CD4-positive, alpha-beta memory T cell (primary cell): ENCODE measurements at regions of chr10 and their contacts with region 1.

Region 1: DNA sequence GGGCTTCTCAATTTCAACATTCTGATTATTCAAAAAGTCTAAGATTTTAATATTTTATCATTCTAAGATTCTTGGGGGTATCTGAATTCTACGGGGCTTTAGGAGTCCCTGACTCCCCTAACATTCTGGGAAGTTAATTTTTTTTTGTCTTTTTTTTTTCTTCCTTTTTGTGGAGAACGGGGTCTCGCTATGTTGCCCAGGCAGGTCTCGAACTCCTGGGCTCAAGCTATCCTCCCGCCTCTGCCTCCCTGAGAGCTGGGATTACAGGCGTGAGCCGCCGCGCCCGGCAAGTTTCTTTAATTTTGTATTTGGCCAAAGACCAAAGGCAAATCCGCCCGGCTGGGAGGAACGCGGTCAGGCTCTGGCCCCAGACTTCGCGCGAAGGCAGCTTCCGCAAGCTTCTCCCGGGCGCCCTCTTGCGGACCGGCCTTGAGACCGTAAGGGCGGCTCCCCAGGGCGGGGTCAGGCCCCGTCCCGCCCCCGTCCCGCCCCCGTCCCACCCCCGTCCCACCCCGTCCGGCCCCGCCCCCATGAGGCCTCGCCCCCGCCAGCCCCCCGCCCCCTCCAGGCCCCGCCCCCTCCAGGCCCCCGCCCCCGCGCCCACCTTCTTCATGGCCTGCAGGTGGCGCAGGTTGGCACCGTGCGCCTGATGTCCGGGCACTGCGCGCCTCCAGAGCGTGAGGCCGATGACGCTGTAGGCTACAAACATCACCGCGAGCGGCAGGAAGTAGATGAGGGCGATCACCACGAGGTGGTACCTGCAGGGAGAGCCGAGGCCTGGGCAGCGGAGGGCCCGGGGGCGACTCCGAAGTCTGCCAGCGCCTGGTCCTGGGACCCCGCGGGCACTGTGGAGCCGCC is 8.2 kb downstream of the TACR2 start:
- DNase-seq: peak; percentile 89 to 91 (median 89)
- H3K4me3 ChIP-seq: peak overlapping the region in 1 of 2 donors; percentile 25
- H3K4me3 Mint-ChIP-seq: peak overlapping the region in 7 of 8 donors; percentile 64 to 82 (median 70)
- H3K27ac ChIP-seq: peak overlapping the region; percentile 61
- H3K27ac Mint-ChIP-seq: peak overlapping the region; percentile 70 to 96 (median 94)
- H3K4me1 ChIP-seq: peaks cover 17% of the 10 kb centered on the region
- H3K4me1 Mint-ChIP-seq: peaks cover 8 to 39% (median 18%) of the 10 kb centered on the region in 4 donors
- H3K27me3 ChIP-seq: no peaks in the 10 kb centered on the region
- H3K27me3 Mint-ChIP-seq: no peaks in the 10 kb centered on the region

Region 2: GRCh38 chr10:69179743-69180524 is 228.6 kb before region 1 on chr10 and contains the start of gene SUPV3L1:
- CTCF ChIA-PET with region 1: no interaction called
- POLR2A ChIA-PET with region 1: interaction called, 3 read pairs
- intact Hi-C with region 1: loop called (anchors 5 kb)
- DNase-seq: peak; percentile 89 to 93 (median 91)
- H3K4me3 ChIP-seq: peak within 1 kb of the TSS; percentile 61 to 93
- H3K4me3 Mint-ChIP-seq: peak within 1 kb of the TSS; percentile 92 to 99 (median 98)
- H3K27ac ChIP-seq: peak within 1 kb of the TSS; percentile 94
- H3K27ac Mint-ChIP-seq: peak within 1 kb of the TSS; percentile 98 to 100 (median 100)
- H3K4me1 ChIP-seq: peaks cover 24% of the 10 kb centered on the region
- H3K4me1 Mint-ChIP-seq: peaks cover 31 to 51% (median 43%) of the 10 kb centered on the region in 4 donors
- H3K27me3 ChIP-seq: no peaks in the 10 kb centered on the region
- H3K27me3 Mint-ChIP-seq: no peaks in the 10 kb centered on the region
- total RNA-seq, gene SUPV3L1: 35.7 to 39.0 TPM

Region 3: GRCh38 chr10:69318106-69318866 is 90.3 kb before region 1 on chr10:
- CTCF ChIA-PET with region 1: interaction called, 7 read pairs
- POLR2A ChIA-PET with region 1: interaction called, 10 read pairs
- intact Hi-C with region 1: loop called (anchors 1 kb)
- DNase-seq: peak; percentile 90 to 92 (median 91)
- H3K4me3 ChIP-seq: peak overlapping the region; percentile 66 to 99
- H3K4me3 Mint-ChIP-seq: peak overlapping the region; percentile 77 to 98 (median 95)
- H3K27ac ChIP-seq: peak overlapping the region; percentile 84
- H3K27ac Mint-ChIP-seq: peak overlapping the region; percentile 79 to 99 (median 84)
- H3K4me1 ChIP-seq: peaks cover 43% of the 10 kb centered on the region
- H3K4me1 Mint-ChIP-seq: peaks cover 23 to 52% (median 35%) of the 10 kb centered on the region in 4 donors
- H3K27me3 ChIP-seq: no peaks in the 10 kb centered on the region
- H3K27me3 Mint-ChIP-seq: no peaks in the 10 kb centered on the region

Region 4: DNA sequence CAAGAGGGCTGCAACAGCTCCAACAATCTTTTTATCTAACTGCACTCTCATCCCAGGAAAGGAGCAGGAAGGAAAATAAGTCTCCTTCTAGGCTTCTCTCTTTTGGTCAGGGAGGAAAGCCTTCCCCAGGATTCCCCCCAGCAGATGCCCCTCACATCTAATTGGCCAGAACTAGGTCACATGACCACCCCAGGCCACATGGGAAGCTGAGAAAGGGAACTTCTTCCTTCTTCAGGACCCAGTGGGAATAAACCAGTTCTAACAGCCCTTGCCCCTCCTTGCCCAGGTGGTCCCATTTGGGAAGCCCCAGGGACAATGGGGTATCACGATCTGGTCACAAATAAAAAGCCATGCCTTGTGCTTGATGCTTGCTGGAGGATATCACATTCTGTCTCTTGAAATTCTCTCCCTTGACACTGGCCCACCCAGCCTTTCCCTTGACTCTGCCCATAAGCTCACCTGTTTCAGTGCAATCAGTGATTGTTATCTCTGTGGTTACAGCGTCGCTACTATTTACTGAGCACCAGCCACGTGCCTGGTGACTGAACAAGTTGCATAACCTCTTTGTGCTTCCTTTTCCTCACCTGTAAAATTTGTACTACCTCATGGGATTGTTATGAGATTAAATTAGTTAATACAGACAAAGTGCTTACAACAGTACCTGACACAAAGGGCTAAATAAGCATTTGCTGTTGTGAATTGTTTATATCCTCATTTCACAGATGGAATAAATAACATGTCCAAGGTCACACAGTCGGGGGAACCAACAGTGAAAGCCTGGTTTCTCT is 17.2 kb after region 1 on chr10:
- CTCF ChIA-PET with region 1: interaction called, 50 read pairs
- POLR2A ChIA-PET with region 1: interaction called, 18 read pairs
- intact Hi-C with region 1: loop called (anchors 1 kb)
- DNase-seq: peak; percentile 73 to 86 (median 82)
- H3K4me3 ChIP-seq: no peak overlapping the region
- H3K4me3 Mint-ChIP-seq: peak overlapping the region in 7 of 8 donors; percentile 2 to 72 (median 47)
- H3K27ac ChIP-seq: peak overlapping the region; percentile 61
- H3K27ac Mint-ChIP-seq: peak overlapping the region; percentile 81 to 95 (median 90)
- H3K4me1 ChIP-seq: peaks cover 56% of the 10 kb centered on the region
- H3K4me1 Mint-ChIP-seq: peaks cover 46 to 71% (median 55%) of the 10 kb centered on the region in 4 donors
- H3K27me3 ChIP-seq: no peaks in the 10 kb centered on the region
- H3K27me3 Mint-ChIP-seq: no peaks in the 10 kb centered on the region

Region 5: GRCh38 chr10:69515699-69516259 is 107.2 kb after region 1 on chr10:
- CTCF ChIA-PET with region 1: interaction called, 20 read pairs
- POLR2A ChIA-PET with region 1: interaction called, 4 read pairs
- intact Hi-C with region 1: no loop called
- DNase-seq: peak; percentile 65 to 78 (median 74)
- H3K4me3 ChIP-seq: no peak overlapping the region
- H3K4me3 Mint-ChIP-seq: no peak overlapping the region
- H3K27ac ChIP-seq: no peak overlapping the region
- H3K27ac Mint-ChIP-seq: no peak overlapping the region
- H3K4me1 ChIP-seq: no peaks in the 10 kb centered on the region
- H3K4me1 Mint-ChIP-seq: no peaks in the 10 kb centered on the region
- H3K27me3 ChIP-seq: no peaks in the 10 kb centered on the region
- H3K27me3 Mint-ChIP-seq: peaks cover 2 to 6% of the 10 kb centered on the region in 2 donors